ENCODE measurements at regions of chr11 and their contacts with region 1.

Region 1: GRCh38 chr11:65418711-65419459 is 3.7 kb upstream of the NEAT1 start:
- DNase-seq: peak; percentile 99
- ATAC-seq: peak; percentile 44

Region 2: GRCh38 chr11:65261591-65262380 is 157.1 kb before region 1 on chr11 and contains the start of gene POLA2:
- intact Hi-C with region 1: no loop called
- DNase-seq: peak; percentile 97
- ATAC-seq: peak; percentile 97
- total RNA-seq, gene POLA2: 4.9 TPM

Region 3: DNA sequence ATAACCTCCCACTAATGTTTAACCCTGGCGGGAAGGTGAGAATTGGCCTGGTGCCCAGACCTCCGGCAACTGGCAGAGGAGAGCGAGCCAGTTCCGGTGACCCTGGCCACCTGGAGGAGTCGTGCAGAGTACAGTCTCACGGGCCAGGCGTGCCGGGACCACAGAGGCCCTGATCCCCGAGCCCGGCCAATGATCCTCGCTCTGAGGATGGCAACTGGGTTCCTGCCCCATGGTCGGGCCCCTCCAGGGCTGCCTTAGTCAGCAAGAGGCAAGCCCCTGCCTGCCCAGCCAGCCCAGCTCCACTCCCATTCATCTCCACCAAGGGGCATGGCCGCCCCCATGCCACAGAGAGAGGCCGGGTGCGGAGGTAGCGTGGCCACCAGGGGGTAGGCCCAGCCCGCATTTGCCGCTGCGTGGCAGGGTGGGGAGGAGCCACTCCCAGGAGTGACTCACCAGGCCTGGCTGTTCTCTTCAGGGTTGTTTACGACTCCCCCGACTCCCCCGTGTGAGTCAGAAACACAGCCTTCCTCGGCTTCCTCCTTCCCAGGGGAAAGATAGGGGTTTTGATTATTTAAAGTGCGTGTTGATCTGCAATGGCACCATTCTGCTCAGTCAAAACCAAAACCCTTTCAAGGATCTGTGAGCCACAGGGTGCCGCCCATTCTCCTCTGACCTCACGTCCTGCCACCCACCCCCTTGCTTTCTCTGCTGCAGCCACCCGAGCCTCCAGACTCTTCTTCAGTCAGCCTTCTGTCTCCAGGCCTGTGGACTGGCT is 36.7 kb before region 1 on chr11 and contains the start of gene SLC25A45:
- intact Hi-C with region 1: loop called (anchors 5 kb)
- DNase-seq: peak; percentile 93
- ATAC-seq: peak; percentile 92
- total RNA-seq, gene SLC25A45: 5.3 TPM

Region 4: DNA sequence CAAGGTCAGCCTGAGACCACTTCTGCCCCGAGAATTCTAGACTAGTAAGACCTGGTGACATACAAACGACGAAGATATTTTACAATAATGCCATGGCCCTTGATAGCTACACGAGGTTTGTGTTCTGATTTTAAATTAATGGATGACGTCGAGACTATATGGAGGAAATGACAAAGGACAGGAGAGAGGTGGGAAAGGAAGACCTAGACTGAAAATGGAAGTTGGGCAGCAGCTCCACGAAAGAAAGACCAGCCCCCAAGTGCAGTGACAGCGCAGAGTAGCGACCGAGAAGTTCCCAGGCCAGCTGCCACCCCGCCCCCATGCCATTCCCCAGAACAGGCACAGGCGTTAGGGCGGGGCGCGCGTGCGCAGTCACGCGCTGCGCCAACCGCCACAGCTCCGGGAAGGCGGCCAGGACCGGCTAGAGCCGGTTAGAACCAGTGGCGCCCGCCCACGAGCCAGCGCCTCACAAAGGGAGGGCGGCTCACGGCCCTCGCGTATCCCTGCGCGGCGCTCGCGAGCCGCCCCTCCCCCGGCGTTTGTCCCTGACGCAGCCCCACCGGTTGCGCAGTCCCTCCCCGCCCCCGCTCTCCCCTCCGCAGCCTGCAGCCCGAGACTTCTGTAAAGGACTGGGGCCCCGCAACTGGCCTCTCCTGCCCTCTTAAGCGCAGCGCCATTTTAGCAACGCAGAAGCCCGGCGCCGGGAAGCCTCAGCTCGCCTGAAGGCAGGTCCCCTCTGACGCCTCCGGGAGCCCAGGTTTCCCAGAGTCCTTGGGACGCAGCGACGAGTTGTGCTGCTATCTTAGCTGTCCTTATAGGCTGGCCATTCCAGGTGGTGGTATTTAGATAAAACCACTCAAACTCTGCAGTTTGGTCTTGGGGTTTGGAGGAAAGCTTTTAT is 78.5 kb after region 1 on chr11:
- intact Hi-C with region 1: loop called (anchors 2 kb)
- DNase-seq: peak; percentile 100
- ATAC-seq: peak; percentile 86

Region 5: GRCh38 chr11:65506770-65507505 is 88.1 kb after region 1 on chr11:
- intact Hi-C with region 1: loop called (anchors 2 kb)
- DNase-seq: no peak
- ATAC-seq: peak; percentile 33